PC-9 (cell line): ENCODE measurements at regions of chr2 and their contacts with region 1.

Region 1: GRCh38 chr2:239991689-239992314 is 33.3 kb downstream of the NDUFA10 start:
- DNase-seq: peak in 1 of 2 experiments; percentile 50
- H3K4me3 ChIP-seq: no peak overlapping the region
- H3K27ac ChIP-seq: no peak overlapping the region
- H3K4me1 ChIP-seq: no peaks in the 10 kb centered on the region
- H3K27me3 ChIP-seq: no peaks in the 10 kb centered on the region
- CTCF ChIP-seq: peak; percentile 98

Region 2: GRCh38 chr2:238362626-238363025 is 1629.2 kb before region 1 on chr2:
- CTCF ChIA-PET with region 1: no interaction called
- POLR2A ChIA-PET with region 1: no interaction called
- intact Hi-C with region 1: loop called (anchors 5 kb)
- DNase-seq: no peak
- H3K4me3 ChIP-seq: no peak overlapping the region
- H3K27ac ChIP-seq: no peak overlapping the region
- H3K4me1 ChIP-seq: no peaks in the 10 kb centered on the region
- H3K27me3 ChIP-seq: no peaks in the 10 kb centered on the region
- CTCF ChIP-seq: no peak

Region 3: GRCh38 chr2:239035361-239036078 is 956.3 kb before region 1 on chr2:
- CTCF ChIA-PET with region 1: no interaction called
- POLR2A ChIA-PET with region 1: no interaction called
- intact Hi-C with region 1: loop called (anchors 10 kb)
- DNase-seq: peak in 1 of 2 experiments; percentile 71
- H3K4me3 ChIP-seq: no peak overlapping the region
- H3K27ac ChIP-seq: no peak overlapping the region
- H3K4me1 ChIP-seq: no peaks in the 10 kb centered on the region
- H3K27me3 ChIP-seq: peaks cover 68% of the 10 kb centered on the region
- CTCF ChIP-seq: peak; percentile 96

Region 4: DNA sequence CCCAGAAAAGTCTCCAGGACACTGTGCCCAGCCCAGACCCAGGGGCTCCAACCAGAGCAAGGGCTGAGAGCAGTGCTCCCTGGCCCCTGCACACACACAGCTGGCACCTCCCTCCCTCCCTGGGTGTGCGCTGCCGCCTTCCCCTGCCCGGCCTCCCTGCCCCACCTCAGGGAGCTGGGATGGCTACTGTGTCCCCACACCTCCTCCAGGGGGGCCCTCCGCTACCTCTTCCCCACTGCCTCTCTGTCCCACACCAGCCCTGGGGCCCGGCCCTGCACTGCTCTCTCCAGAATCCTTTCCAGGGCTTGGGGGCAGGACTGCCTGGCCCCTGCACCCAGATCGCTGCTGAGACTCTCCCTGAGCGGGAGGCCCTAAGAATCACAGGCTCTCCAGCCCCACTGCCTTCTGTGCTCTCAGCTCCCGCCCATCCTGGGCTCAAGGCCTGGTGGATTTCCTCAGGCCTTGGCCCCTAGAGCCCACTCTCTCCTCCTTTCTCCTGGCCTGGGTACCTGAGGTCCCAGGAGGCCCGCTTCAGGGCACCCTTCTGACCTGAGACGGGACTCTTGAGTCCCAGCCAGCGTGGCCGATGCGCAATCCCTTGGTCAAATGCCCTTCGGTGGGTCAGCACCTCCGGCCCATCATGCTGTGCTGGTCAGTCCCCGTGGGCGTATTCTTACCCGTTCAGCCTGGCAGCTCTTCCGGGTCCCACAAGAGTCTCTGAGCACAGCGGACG is 314.2 kb before region 1 on chr2:
- CTCF ChIA-PET with region 1: no interaction called
- POLR2A ChIA-PET with region 1: no interaction called
- intact Hi-C with region 1: no loop called
- DNase-seq: no peak
- H3K4me3 ChIP-seq: no peak overlapping the region
- H3K27ac ChIP-seq: no peak overlapping the region
- H3K4me1 ChIP-seq: no peaks in the 10 kb centered on the region
- H3K27me3 ChIP-seq: peaks cover 93% of the 10 kb centered on the region
- CTCF ChIP-seq: no peak

Region 5: GRCh38 chr2:239824046-239824694 is 167.6 kb before region 1 on chr2:
- CTCF ChIA-PET with region 1: no interaction called
- POLR2A ChIA-PET with region 1: no interaction called
- intact Hi-C with region 1: loop called (anchors 1 kb)
- DNase-seq: peak; percentile 69 to 74
- H3K4me3 ChIP-seq: no peak overlapping the region
- H3K27ac ChIP-seq: no peak overlapping the region
- H3K4me1 ChIP-seq: no peaks in the 10 kb centered on the region
- H3K27me3 ChIP-seq: peaks cover 94% of the 10 kb centered on the region
- CTCF ChIP-seq: peak; percentile 62